Activated T-helper 1 cell treated with anti-CD3 and anti-CD28 coated beads, Interleukin-12 subunit alpha, Interleukin-12 subunit beta, Interleukin-2, Interleukin-4 antibody, amounts not matched to agents 30 ng/mL and 10 ng/mL and 1 ng/mL, durations not matched to agents 14 hours and 24 hours and 36 hours (primary cell): ENCODE measurements at regions of chr2 and their contacts with region 1.

Region 1: GRCh38 chr2:161426922-161427663 is 11.0 kb downstream of the TBR1 start:
- DNase-seq: no peak
- H3K4me3 Mint-ChIP-seq: peak overlapping the region; percentile 74
- H3K27ac Mint-ChIP-seq: peak overlapping the region; percentile 72
- H3K4me1 Mint-ChIP-seq: peaks cover 29% of the 10 kb centered on the region
- H3K27me3 Mint-ChIP-seq: peaks cover 84% of the 10 kb centered on the region

Region 2: GRCh38 chr2:160940699-160941098 is 486.4 kb before region 1 on chr2:
- intact Hi-C with region 1: no loop called
- DNase-seq: peak; percentile 4
- H3K4me3 Mint-ChIP-seq: peak overlapping the region; percentile 8
- H3K27ac Mint-ChIP-seq: peak overlapping the region; percentile 25
- H3K4me1 Mint-ChIP-seq: peaks cover 27% of the 10 kb centered on the region
- H3K27me3 Mint-ChIP-seq: no peaks in the 10 kb centered on the region

Region 3: DNA sequence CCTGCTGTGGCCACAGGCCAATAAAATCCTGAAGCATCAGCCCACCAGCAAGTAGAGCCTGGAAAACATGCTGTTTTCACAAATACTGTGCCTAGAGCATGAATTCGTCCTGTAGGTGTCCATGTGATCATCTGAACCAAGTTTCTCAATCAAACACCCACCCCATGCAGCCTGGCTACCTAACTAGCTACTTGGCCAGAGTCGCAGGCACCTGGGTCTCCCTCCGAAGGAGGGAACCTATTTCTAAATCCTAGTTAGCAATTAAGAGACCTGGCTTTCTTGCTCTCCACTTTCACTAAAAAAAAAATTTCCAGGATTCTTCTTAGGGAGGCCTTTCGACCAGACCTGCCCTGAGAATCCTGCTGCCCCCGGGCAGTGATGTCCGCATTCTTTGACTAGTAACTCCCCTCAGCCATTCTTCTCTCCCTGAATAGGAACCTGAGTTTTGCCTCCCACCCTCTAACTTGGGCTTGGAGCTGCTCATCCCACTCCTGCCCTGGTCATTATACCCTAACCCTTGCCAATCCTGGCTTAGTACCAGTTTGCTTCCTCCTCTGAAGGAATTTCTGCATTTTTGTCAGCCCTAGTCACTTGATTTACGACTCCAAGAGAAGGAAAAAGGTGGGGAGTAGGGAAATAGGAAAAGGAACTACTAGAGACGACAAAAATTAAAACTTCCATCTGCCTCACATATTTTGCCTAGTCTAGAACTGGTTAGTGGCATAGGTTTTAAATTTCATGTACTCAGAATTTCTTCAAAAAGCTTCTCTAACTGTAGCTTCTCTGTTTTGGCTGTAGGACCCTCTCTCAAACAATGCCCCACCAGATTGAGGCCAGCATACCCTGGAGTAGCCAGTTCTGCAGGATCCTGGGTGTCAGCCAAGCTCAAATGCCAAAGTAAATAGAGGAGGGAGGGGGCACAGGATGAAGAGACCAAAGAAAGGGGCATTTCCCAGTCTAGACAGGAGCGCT is 292.3 kb before region 1 on chr2:
- intact Hi-C with region 1: no loop called
- DNase-seq: no peak
- H3K4me3 Mint-ChIP-seq: peak overlapping the region; percentile 52
- H3K27ac Mint-ChIP-seq: peak overlapping the region; percentile 82
- H3K4me1 Mint-ChIP-seq: peaks cover 41% of the 10 kb centered on the region
- H3K27me3 Mint-ChIP-seq: no peaks in the 10 kb centered on the region

Region 4: GRCh38 chr2:161414042-161415033 is 12.8 kb before region 1 on chr2:
- intact Hi-C with region 1: loop called (anchors 1 kb)
- DNase-seq: no peak
- H3K4me3 Mint-ChIP-seq: peak overlapping the region; percentile 75
- H3K27ac Mint-ChIP-seq: no peak overlapping the region
- H3K4me1 Mint-ChIP-seq: peaks cover 53% of the 10 kb centered on the region
- H3K27me3 Mint-ChIP-seq: peaks cover 52% of the 10 kb centered on the region

Region 5: DNA sequence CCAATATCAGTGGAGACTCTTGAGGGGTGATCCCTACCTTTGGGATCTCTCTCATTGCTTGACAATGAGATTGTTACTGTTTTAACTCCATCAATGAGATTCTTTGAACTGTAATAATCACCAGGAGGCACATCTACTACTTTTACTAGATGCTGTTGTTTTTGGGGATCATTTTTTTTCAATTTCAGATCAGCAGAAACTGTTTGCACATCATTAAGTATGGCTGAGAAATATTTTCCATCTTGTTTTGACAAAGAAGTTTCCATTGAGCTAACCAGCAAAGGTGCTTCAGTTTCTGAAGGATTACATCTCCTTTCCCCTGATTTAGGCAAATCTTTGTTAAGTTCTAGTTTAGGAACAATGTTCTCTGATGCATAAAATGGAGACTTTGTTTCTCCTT is 142.3 kb after region 1 on chr2:
- intact Hi-C with region 1: loop called (anchors 5 kb)
- DNase-seq: no peak
- H3K4me3 Mint-ChIP-seq: no peak overlapping the region
- H3K27ac Mint-ChIP-seq: peak overlapping the region; percentile 79
- H3K4me1 Mint-ChIP-seq: peaks cover 21% of the 10 kb centered on the region
- H3K27me3 Mint-ChIP-seq: no peaks in the 10 kb centered on the region

Region 6: DNA sequence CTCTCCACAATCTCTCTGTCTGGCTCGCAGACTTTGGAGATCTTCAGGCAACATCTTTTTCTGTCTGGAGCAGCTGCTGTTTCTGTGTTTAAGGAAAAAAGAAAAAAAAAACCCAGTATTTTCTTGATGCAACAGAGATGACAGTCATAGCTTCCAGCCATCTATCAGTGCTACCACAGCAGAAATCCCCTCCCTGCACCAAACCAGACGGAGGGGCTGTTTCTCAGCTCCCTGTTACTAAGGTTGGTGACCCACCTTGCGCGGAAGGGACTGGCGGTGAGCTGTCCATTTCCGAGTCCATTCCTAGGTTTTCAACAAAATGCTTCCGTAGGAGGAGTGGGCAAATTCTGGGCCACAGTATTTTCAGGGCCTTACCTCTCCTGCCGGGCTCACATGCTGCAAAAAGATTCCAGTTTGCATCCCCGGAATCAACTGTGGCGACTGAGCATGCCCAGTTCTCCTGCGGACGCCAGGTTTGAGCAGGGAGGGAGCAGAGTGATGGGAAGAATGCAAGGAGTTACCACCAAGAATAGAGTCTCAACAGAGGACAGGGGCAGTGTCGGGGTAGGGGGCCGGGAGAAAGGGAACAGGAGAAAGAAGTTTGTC is 198.3 kb after region 1 on chr2:
- intact Hi-C with region 1: loop called (anchors 5 kb)
- DNase-seq: no peak
- H3K4me3 Mint-ChIP-seq: no peak overlapping the region
- H3K27ac Mint-ChIP-seq: no peak overlapping the region
- H3K4me1 Mint-ChIP-seq: peaks cover 5% of the 10 kb centered on the region
- H3K27me3 Mint-ChIP-seq: peaks cover 44% of the 10 kb centered on the region